Right ventricle myocardium inferior (tissue), 1 donor: ENCODE measurements at regions of chr18 and their contacts with region 1.

Region 1: DNA sequence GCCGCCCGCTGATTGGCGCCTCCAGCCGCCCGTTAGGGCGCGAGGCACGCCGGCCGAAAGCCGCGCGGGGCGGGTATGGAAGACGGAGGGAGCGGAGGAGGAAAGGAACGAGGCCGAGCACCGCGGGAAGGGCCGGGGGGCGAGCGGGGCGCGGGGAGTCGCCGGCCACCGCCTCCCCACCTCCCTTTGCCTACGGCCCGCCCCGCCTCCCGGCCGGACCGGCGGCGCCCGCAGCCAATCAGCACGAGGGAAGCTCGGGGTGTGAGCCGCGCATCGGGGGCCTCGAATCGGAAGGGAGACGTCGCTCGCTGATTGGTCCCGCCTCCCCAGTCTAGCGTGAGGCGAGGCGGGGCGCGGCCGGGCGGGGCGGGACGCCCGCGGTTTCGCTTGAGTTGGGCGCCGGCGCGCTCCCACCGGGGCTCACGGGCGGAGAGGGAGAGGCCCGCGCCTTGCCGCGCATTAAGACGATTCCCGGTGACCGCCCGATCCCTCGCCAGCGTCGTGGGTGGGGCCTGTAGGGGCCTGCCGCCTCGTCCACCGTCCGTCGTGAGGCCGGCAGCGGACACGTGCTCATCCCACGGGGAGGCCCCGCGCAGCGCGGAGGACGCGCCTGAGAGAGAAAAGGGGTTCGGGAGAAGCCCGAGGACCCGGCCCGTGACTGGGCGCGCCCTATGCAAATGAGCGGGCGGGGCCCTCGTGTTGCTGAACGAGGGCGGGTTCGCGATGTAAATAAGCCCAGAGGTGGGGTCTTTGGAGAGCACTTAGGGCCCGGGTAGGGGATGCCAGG is 665 bp upstream of the SMAD2 start:
- DNase-seq: peak; percentile 99
- ATAC-seq: peak; percentile 94

Region 2: DNA sequence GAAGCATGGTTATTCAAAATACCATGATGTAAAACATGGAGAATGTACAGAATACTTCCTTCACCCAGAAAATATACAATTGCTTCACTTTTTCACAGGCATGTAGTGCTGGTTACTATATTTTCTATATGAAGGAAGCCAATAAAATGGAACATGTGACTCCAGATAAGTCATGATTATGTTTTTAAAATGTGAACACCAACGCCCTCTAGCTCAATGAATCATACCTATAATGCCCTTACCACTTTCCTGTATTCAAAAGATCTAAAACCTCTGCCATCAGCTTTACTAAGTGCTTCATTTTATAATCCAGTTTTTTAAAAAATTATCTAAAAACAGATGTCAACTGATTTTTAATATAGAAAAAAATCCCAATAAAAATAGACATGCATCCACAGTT is 60.5 kb before region 1 on chr18:
- intact Hi-C with region 1: loop called (anchors 5 kb)
- DNase-seq: no peak
- ATAC-seq: no peak

Region 3: DNA sequence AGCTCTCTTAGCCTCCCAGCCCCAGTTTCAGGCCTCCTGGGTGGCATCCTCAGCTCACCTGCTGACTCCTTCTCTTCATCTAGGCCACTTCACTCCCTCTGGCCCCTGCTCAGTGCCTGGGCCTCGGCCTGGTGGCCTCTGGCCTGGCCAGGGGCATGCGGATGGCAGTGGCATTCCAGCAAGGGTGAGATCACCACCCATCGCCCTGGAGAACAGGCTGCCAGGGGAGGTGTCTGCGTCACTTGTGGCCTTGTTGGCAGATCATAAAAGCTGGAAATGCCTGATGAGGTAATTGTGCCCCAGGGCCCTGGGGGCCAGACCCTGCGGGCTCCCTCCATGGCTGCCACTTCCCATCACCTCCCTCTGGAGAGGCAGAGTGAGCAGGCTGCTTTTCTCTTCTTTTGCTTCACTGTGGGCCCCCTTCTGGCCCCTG is 71.8 kb after region 1 on chr18:
- intact Hi-C with region 1: loop called (anchors 5 kb)
- DNase-seq: no peak
- ATAC-seq: peak; percentile 82